Right cardiac atrium (tissue), 5 donors: ENCODE measurements at regions of chr3 and their contacts with region 1.

Region 1: DNA sequence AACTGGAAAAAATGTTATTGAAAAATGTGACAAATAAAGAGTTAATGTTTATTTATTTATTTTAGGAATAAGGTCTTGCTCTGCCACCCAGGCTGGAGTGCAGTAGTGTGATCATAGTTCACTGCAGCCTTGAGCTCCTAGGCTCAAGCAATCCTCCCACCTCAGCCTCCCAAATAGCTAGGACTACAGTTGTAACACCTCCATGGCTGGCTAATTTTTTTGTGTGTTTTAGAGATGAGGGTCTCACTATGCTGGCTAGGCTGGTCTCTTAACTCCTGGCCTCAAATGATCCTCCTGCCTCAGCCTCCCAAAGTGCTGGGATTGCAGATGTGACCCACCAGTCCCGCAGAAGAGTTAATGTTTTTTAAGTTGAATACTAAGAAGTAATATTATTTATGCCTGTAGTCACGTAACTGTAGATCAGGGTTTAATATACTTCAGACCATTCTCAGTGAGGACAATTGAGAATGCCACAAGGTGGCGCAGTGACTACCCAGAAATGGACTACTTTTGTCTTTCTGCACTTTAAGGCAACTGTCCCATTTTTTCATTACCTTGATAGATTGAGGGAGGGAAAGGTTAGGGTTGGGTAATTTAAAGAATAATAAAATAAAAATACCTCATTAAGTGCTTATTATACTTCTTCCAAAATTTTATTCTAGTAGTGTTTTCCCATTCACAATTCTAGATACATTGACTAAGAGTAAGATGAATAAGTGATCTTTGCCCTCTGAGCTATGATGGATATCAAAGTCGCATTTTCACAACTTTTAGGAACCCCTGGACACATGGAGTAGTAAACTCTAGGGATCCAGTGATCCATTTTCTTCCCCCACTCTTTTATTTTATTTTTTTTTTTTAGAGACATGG is 6.0 kb downstream of the MUC13 start:
- DNase-seq: peak; percentile 63 to 81 (median 65)
- ATAC-seq: peak; percentile 68 to 75
- H3K4me3 ChIP-seq: no peak overlapping the region
- H3K27ac ChIP-seq: no peak overlapping the region
- H3K4me1 ChIP-seq: no peaks in the 10 kb centered on the region
- H3K27me3 ChIP-seq: no peaks in the 10 kb centered on the region

Region 2: DNA sequence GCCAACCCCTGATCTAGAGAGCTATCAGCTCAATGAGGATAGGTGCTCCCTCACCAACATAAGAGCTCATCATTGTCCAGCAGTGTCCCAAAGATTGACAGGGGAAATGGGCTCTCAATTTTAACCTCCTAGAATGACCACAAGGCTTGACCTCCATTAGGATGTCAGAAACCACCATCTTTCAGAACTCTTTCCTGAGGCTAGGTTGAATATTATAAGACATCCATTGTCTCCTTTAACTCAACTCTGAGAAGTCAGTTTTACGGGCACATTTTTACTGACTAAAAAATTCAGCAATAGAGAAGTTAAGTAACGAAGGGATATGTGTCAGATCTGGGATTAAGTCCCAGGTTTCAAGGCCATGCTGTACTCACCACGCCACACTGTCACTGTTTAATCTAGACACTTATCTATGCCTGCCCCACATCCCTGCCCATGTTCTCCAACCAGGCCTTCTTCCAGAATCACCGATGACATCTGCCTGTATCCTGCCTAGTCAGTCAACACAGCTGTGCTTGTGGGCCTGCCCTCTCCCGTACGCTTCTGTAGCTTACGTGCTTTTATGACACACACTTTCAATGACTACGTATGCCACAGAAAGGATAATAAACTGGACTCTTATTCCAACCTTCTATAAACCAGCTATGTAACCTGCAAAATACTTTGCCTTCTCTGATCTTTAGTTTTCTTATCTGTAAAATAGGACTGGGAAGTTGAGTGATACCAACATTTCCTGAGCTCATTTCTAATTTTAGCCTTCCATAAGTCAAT is 23.1 kb after region 1 on chr3:
- intact Hi-C with region 1: loop called in 1 of 4 experiments (anchors 2 kb)
- DNase-seq: no peak
- ATAC-seq: no peak
- H3K4me3 ChIP-seq: no peak overlapping the region
- H3K27ac ChIP-seq: no peak overlapping the region
- H3K4me1 ChIP-seq: no peaks in the 10 kb centered on the region
- H3K27me3 ChIP-seq: no peaks in the 10 kb centered on the region

Region 3: GRCh38 chr3:125165189-125165947 is 236.8 kb after region 1 on chr3:
- intact Hi-C with region 1: loop called in 3 of 4 experiments (anchors 5 to 10 kb)
- DNase-seq: peak in 2 of 3 donors; percentile 81
- ATAC-seq: peak; percentile 79 to 83
- H3K4me3 ChIP-seq: no peak overlapping the region
- H3K27ac ChIP-seq: no peak overlapping the region
- H3K4me1 ChIP-seq: peaks cover 6% of the 10 kb centered on the region
- H3K27me3 ChIP-seq: no peaks in the 10 kb centered on the region

Region 4: GRCh38 chr3:125437631-125438435 is 509.3 kb after region 1 on chr3:
- intact Hi-C with region 1: loop called (anchors 5 to 10 kb)
- DNase-seq: peak; percentile 57 to 81 (median 64)
- ATAC-seq: peak; percentile 47 to 62
- H3K4me3 ChIP-seq: no peak overlapping the region
- H3K27ac ChIP-seq: no peak overlapping the region
- H3K4me1 ChIP-seq: no peaks in the 10 kb centered on the region
- H3K27me3 ChIP-seq: no peaks in the 10 kb centered on the region